Breast epithelium (tissue), 4 donors: ENCODE measurements at regions of chr2 and their contacts with region 1.

Region 1: DNA sequence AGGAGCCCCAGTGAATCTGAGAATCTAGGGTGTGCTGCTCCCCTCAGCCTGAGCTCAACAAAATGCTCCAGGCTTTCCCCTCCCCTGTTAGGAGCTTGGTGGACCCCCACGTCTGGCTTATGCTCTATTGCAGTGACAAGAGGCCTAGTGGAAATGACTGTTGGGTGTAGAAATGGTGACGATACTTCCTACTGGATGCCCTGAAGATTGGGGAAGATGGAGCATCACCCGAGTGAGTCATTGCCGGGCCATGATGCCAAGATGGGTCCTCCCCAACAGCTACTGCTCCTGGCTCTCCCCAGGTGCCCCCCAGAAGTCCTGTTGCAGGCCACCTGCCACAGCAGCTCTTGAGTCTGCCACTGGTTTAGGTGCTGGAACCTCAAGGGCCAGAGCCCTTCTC is 50.8 kb downstream of the RHOB start:
- DNase-seq: no peak
- H3K4me3 ChIP-seq: no peak overlapping the region
- H3K27ac ChIP-seq: peak overlapping the region; percentile 82 to 93
- H3K4me1 ChIP-seq: peaks cover 0 to 7% of the 10 kb centered on the region in 2 donors
- H3K27me3 ChIP-seq: no peaks in the 10 kb centered on the region
- CTCF ChIP-seq: no peak
- POLR2A ChIP-seq: no peak

Region 2: DNA sequence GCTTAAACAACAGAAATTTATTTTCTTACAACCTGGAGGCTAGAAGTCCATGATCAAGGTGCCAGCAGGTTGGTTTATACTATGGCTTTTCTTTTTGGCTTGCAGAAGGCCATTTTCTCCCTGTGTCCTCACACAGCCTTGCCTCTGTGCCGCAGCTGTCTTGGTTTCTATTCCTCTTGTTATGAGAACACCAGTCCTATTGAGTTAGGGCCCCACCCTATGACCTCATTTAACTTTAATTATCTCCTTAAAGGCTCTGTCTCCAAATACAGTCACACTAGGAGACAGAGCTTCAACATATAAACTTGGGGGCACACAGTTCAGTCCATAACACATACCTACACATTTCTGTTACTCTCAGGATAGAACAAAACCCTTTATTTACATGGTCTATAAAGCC is 68.1 kb before region 1 on chr2:
- intact Hi-C with region 1: no loop called
- DNase-seq: no peak
- H3K4me3 ChIP-seq: no peak overlapping the region
- H3K27ac ChIP-seq: no peak overlapping the region
- H3K4me1 ChIP-seq: peaks cover 0 to 2% of the 10 kb centered on the region in 2 donors
- H3K27me3 ChIP-seq: no peaks in the 10 kb centered on the region
- CTCF ChIP-seq: no peak
- POLR2A ChIP-seq: no peak

Region 3: DNA sequence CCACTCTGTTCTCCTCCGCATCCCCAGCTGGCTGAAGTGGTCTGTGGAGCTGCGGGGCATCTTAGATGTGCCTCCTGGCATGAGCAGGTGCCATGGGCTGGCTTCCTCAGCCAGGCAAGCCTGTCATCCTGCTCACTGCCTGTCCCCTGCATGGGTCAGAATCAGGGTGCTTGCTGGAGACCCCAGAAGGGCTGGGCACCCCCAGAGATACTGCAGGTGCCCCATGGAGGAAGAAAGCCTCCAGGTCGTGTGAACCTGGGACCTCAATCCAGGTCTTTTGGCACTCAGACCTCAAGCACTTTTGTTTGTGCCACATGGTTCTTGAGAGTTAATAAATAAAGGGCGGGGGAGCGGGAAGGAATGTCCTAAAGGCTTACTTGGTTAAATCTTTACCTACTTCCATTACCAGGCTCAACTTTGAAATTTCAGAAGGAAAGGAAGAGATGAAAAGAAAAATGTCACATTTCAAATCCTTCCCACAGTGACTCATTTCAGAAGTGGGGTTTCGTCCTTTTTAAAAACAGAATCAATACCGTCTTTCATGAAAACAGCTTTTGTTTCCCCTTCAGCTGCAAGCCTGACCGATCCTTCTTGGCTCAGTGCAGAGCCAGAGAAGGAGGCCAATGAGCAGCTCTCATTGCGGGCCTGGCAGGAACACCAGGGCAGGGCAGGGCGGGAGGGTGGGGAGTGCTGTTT is 19.1 kb after region 1 on chr2:
- intact Hi-C with region 1: loop called (anchors 1 kb)
- DNase-seq: peak in 1 of 2 donors; percentile 55
- H3K4me3 ChIP-seq: no peak overlapping the region
- H3K27ac ChIP-seq: peak overlapping the region; percentile 89 to 90
- H3K4me1 ChIP-seq: no peaks in the 10 kb centered on the region
- H3K27me3 ChIP-seq: no peaks in the 10 kb centered on the region
- CTCF ChIP-seq: no peak
- POLR2A ChIP-seq: no peak